ENCODE measurements at regions of chrX and their contacts with region 1.

Region 1: GRCh38 chrX:120629667-120630537 is at the start of gene C1GALT1C1:
- DNase-seq: peak; percentile 80 to 96 (median 92)
- ATAC-seq: peak; percentile 95
- H3K4me3 ChIP-seq: peak within 1 kb of the TSS; percentile 87
- H3K4me3 Mint-ChIP-seq: peak within 1 kb of the TSS; percentile 87 to 94 (median 92)
- H3K27ac ChIP-seq: peak within 1 kb of the TSS; percentile 95
- H3K27ac Mint-ChIP-seq: peak within 1 kb of the TSS; percentile 96 to 100 (median 98)
- H3K4me1 ChIP-seq: peaks cover 6 to 11% of the 10 kb centered on the region in 2 donors
- H3K4me1 Mint-ChIP-seq: peaks cover 0 to 32% (median 24%) of the 10 kb centered on the region in 7 donors
- H3K27me3 ChIP-seq: no peaks in the 10 kb centered on the region
- H3K27me3 Mint-ChIP-seq: no peaks in the 10 kb centered on the region
- total RNA-seq, gene C1GALT1C1: 4.7 to 29.5 (median 16.4) TPM

Region 2: GRCh38 chrX:120485638-120486520 is 144.0 kb before region 1 on chrX:
- CTCF ChIA-PET with region 1: no interaction called
- POLR2A ChIA-PET with region 1: interaction called, 3 read pairs
- intact Hi-C with region 1: loop called in 1 of 2 experiments (anchors 1 kb)
- DNase-seq: peak; percentile 21 to 52 (median 43)
- ATAC-seq: peak; percentile 83
- H3K4me3 ChIP-seq: peak overlapping the region; percentile 89
- H3K4me3 Mint-ChIP-seq: peak overlapping the region; percentile 81 to 94 (median 89)
- H3K27ac ChIP-seq: peak overlapping the region; percentile 69
- H3K27ac Mint-ChIP-seq: peak overlapping the region; percentile 81 to 96 (median 91)
- H3K4me1 ChIP-seq: peaks cover 9 to 18% of the 10 kb centered on the region in 2 donors
- H3K4me1 Mint-ChIP-seq: peaks cover 5 to 28% (median 19%) of the 10 kb centered on the region in 7 donors
- H3K27me3 ChIP-seq: no peaks in the 10 kb centered on the region
- H3K27me3 Mint-ChIP-seq: no peaks in the 10 kb centered on the region

Region 3: GRCh38 chrX:120560842-120561633 is 68.9 kb before region 1 on chrX and contains the start of gene CUL4B:
- CTCF ChIA-PET with region 1: no interaction called
- POLR2A ChIA-PET with region 1: interaction called, 42 read pairs
- intact Hi-C with region 1: loop called (anchors 1 kb)
- DNase-seq: peak; percentile 73 to 95 (median 92)
- ATAC-seq: peak; percentile 96
- H3K4me3 ChIP-seq: peak within 1 kb of the TSS; percentile 87
- H3K4me3 Mint-ChIP-seq: peak within 1 kb of the TSS; percentile 87 to 99 (median 98)
- H3K27ac ChIP-seq: peak within 1 kb of the TSS; percentile 100
- H3K27ac Mint-ChIP-seq: peak within 1 kb of the TSS; percentile 88 to 100 (median 95)
- H3K4me1 ChIP-seq: peaks cover 0 to 3% of the 10 kb centered on the region in 2 donors
- H3K4me1 Mint-ChIP-seq: peaks cover 6 to 32% (median 26%) of the 10 kb centered on the region in 7 donors
- H3K27me3 ChIP-seq: no peaks in the 10 kb centered on the region
- H3K27me3 Mint-ChIP-seq: no peaks in the 10 kb centered on the region
- total RNA-seq, gene CUL4B: 34.9 to 67.7 (median 43.0) TPM

Region 4: GRCh38 chrX:120617996-120618630 is 11.8 kb before region 1 on chrX:
- CTCF ChIA-PET with region 1: no interaction called
- POLR2A ChIA-PET with region 1: interaction called, 3 read pairs
- intact Hi-C with region 1: loop called in 1 of 2 experiments (anchors 2 kb)
- DNase-seq: no peak
- ATAC-seq: no peak
- H3K4me3 ChIP-seq: no peak overlapping the region
- H3K4me3 Mint-ChIP-seq: no peak overlapping the region
- H3K27ac ChIP-seq: no peak overlapping the region
- H3K27ac Mint-ChIP-seq: no peak overlapping the region
- H3K4me1 ChIP-seq: no peaks in the 10 kb centered on the region
- H3K4me1 Mint-ChIP-seq: peaks cover 0 to 4% (median 0%) of the 10 kb centered on the region in 7 donors
- H3K27me3 ChIP-seq: no peaks in the 10 kb centered on the region
- H3K27me3 Mint-ChIP-seq: no peaks in the 10 kb centered on the region

Region 5: DNA sequence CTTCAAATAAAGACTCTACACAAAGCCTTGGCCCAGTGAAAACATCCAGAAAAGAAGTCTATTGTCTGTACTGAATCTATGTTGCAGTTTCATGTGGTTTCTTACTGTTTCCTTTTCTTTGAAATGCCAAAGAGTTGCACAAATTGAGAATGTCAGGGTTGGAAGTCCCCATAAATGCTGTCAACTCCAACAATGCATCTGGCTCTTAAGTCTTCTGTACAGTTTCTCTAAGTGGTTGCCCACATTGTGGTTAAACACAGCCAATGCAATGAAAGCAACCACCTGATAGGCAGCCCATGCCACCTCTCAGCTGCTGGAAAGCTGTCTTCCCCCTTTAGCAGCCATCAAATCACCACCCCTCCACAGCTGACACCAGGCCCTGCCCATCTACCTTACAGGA is 67.2 kb after region 1 on chrX:
- CTCF ChIA-PET with region 1: no interaction called
- POLR2A ChIA-PET with region 1: no interaction called
- intact Hi-C with region 1: loop called (anchors 1 kb)
- DNase-seq: peak; percentile 9 to 83 (median 71)
- ATAC-seq: peak; percentile 97
- H3K4me3 ChIP-seq: no peak overlapping the region
- H3K4me3 Mint-ChIP-seq: peak overlapping the region; percentile 41 to 83 (median 62)
- H3K27ac ChIP-seq: peak overlapping the region; percentile 67
- H3K27ac Mint-ChIP-seq: peak overlapping the region; percentile 88 to 99 (median 93)
- H3K4me1 ChIP-seq: peaks cover 0 to 20% of the 10 kb centered on the region in 2 donors
- H3K4me1 Mint-ChIP-seq: peaks cover 10 to 29% (median 22%) of the 10 kb centered on the region in 7 donors
- H3K27me3 ChIP-seq: no peaks in the 10 kb centered on the region
- H3K27me3 Mint-ChIP-seq: no peaks in the 10 kb centered on the region

Measured in naive thymus-derived CD4-positive, alpha-beta T cell (primary cell).